Heart left ventricle (tissue), 16 donors: ENCODE measurements at regions of chr1 and their contacts with region 1.

Region 1: DNA sequence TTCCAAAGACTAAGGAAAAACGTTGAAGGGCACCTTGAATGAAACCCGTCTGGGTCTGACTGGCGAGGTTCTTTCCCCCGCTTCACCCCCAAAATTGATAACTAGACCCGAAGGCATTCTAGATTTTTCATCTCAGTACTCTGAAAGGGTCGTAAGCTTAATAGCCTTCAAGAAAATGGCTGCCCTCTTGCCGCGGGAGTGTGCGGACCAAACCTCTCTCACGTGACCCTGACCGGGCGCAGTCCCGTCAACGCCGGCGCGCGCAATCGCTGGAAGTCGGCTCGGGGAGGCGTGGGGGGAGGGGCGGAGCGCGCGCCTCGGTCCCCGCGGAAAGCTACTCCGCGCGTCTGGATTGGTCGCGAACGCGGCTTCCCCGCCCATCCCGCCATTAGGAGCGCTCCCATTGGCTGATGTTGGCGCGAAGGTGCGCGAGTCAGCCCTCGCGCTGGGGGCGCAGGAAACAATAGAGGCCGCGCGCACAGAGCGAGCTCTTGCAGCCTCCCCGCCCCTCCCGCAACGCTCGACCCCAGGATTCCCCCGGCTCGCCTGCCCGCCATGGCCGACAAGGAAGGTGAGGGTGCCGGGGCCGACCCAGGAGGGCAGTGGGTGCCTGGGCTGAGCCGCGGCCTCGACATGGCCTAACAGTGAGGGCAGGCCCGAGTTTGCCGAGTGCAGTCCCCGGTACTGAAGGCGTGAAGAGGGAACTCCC is at the start of gene RBBP4:
- DNase-seq: peak; percentile 98 to 99 (median 99)
- ATAC-seq: peak; percentile 96 to 97 (median 96)
- H3K4me3 ChIP-seq: peak within 1 kb of the TSS; percentile 54 to 95 (median 72)
- H3K27ac ChIP-seq: peak within 1 kb of the TSS; percentile 95 to 100 (median 97)
- H3K4me1 ChIP-seq: peaks cover 2 to 57% (median 27%) of the 10 kb centered on the region in 12 donors
- H3K27me3 ChIP-seq: no peaks in the 10 kb centered on the region
- CTCF ChIP-seq: peak in 1 of 12 donors; percentile 6
- POLR2A ChIP-seq: peak; percentile 48 to 76
- total RNA-seq, gene RBBP4: 73.1 to 141 (median 101) TPM

Region 2: DNA sequence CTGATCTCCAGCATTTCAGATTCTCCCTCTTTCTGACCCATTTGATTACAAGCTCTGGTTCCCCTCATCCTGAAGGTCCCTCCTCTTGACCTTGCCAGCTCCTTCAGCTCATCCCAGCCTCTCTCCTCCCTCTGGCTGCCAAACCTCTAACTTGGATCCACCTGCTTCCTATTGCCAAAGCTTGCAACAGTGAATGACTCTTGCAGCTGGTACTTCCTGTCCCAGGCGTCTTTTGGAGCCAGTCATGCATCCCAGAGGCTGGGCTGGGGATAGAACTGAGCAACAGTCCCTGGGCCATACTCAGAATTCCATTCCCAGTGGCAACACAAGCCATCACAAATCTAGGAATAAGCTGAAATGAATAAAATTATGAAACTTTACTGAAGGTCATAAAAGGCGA is 807.4 kb before region 1 on chr1:
- intact Hi-C with region 1: no loop called
- DNase-seq: no peak
- ATAC-seq: no peak
- H3K4me3 ChIP-seq: no peak overlapping the region
- H3K27ac ChIP-seq: no peak overlapping the region
- H3K4me1 ChIP-seq: peaks cover 0 to 4% (median 0%) of the 10 kb centered on the region in 12 donors
- H3K27me3 ChIP-seq: no peaks in the 10 kb centered on the region
- CTCF ChIP-seq: no peak
- POLR2A ChIP-seq: no peak

Region 3: DNA sequence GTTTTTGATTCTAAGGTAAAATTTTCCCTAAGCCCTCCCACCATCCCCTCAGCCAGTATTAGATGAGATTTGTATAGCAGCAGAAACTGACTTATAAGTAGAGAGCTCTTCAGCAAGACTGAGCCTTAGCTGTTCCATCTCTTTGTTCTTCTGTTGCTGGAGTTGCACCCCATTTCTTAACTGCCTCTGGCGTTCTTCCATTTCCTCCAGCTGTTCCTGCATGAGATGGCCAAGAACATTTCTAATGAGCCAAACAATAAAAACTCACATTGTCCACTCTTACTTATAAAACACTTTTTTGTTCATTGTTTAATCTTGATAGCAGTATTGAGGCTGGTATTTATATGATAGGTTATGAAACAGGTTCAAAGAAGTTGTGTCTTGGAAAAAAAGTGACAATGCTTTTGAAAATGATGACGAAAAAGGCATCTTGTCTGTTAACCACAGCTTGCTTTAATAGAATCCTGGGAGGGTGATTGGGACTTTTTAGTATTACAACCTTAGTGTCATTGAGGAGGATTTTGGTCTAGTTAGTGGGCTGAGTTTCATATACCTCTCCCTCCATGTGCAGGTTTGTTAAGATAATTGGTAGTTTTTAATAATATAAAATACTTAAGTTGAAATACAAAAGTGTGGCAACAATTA is 33.4 kb after region 1 on chr1:
- intact Hi-C with region 1: loop called in 1 of 10 experiments (anchors 2 kb)
- DNase-seq: peak in 4 of 5 donors; percentile 24 to 43 (median 37)
- ATAC-seq: peak; percentile 17 to 55 (median 44)
- H3K4me3 ChIP-seq: no peak overlapping the region
- H3K27ac ChIP-seq: peak overlapping the region in 9 of 12 donors; percentile 3 to 63 (median 33)
- H3K4me1 ChIP-seq: peaks cover 0 to 38% (median 11%) of the 10 kb centered on the region in 12 donors
- H3K27me3 ChIP-seq: no peaks in the 10 kb centered on the region
- CTCF ChIP-seq: no peak
- POLR2A ChIP-seq: no peak

Region 4: GRCh38 chr1:32695098-32695904 is 44.4 kb after region 1 on chr1:
- intact Hi-C with region 1: no loop called
- DNase-seq: peak; percentile 63 to 86 (median 71)
- ATAC-seq: peak in 3 of 4 donors; percentile 60 to 67 (median 62)
- H3K4me3 ChIP-seq: peak overlapping the region in 4 of 12 donors; percentile 4 to 15 (median 6)
- H3K27ac ChIP-seq: peak overlapping the region in 9 of 12 donors; percentile 2 to 63 (median 39)
- H3K4me1 ChIP-seq: peaks cover 0 to 27% (median 19%) of the 10 kb centered on the region in 12 donors
- H3K27me3 ChIP-seq: no peaks in the 10 kb centered on the region
- CTCF ChIP-seq: no peak
- POLR2A ChIP-seq: no peak